ENCODE measurements at regions of chr1 and their contacts with region 1.

Region 1: GRCh38 chr1:24502709-24503058 is at the start of gene RCAN3:
- DNase-seq: peak; percentile 92
- H3K4me3 Mint-ChIP-seq: peak within 1 kb of the TSS; percentile 99
- H3K27ac Mint-ChIP-seq: peak within 1 kb of the TSS; percentile 99
- H3K4me1 Mint-ChIP-seq: peaks cover 71% of the 10 kb centered on the region
- H3K27me3 Mint-ChIP-seq: no peaks in the 10 kb centered on the region
- total RNA-seq, gene RCAN3: 59.3 to 62.6 TPM

Region 2: GRCh38 chr1:24475700-24476099 is 27.0 kb before region 1 on chr1:
- CTCF ChIA-PET with region 1: interaction called, 15 read pairs
- POLR2A ChIA-PET with region 1: interaction called, 232 read pairs
- DNase-seq: no peak
- H3K4me3 Mint-ChIP-seq: no peak overlapping the region
- H3K27ac Mint-ChIP-seq: no peak overlapping the region
- H3K4me1 Mint-ChIP-seq: peaks cover 5% of the 10 kb centered on the region
- H3K27me3 Mint-ChIP-seq: no peaks in the 10 kb centered on the region

Region 3: DNA sequence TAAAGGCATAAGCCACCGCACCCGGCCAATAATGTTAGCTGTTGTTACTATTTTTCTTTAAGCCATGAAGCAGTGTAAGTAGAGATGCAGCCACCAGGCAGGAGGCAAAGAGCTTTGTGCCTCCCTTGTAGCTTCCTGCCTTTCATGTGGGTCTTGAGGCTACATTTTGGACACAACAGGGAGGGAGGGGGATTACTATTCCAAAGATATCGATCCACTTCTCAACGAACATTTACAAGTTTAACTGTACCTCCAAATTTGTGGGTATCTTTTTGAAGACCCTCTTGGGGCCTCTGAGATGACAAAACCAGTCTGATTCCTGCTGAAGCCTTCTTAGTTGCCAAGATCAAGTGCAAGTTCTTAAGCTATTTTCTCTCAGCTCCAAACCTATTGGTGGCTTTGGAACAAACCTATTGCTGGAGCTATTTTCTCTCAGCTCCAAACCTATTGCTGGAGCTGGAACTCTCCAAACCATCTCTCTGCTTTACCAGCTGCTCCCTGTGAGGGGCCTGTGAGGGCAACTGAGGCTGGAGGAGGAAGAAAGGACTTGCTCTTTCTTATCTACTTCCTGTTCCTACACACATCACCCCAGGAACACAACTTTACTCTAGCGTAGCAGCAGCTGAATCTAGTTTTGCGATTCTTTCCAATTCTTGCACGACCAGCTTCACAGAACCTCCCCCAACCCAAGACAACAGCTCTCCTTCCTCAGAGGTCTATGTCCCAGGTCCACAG is 16.2 kb before region 1 on chr1:
- CTCF ChIA-PET with region 1: interaction called, 34 read pairs
- POLR2A ChIA-PET with region 1: interaction called, 232 read pairs
- DNase-seq: no peak
- H3K4me3 Mint-ChIP-seq: peak overlapping the region; percentile 36
- H3K27ac Mint-ChIP-seq: peak overlapping the region; percentile 82
- H3K4me1 Mint-ChIP-seq: peaks cover 59% of the 10 kb centered on the region
- H3K27me3 Mint-ChIP-seq: no peaks in the 10 kb centered on the region

Region 4: DNA sequence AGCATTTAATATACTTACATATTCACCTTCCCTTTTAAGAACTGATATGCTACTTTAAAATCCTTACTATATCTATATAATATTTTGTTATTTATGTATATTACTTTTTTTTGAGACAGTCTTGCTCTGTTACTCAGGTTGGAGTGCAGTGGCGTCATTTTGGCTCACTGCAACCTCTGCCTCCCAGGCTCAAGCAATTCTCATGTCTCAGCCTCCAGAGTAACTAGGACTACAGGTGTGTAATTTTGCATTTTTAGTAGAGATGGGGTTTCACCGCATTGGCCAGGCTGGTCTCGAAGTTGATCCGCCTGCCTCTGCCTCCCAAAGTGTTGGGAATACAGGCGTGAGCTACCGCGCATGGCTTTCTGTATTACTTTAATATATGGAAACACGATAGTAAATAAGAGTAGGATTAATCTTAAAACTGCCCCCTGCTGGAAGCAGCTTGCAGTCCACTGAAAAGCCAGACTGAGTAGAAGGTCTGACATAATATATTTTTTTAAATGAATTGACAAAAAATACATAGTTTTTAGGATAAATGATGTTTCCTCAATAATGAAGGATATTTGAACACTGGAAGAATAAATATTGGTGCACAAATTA is 24.4 kb after region 1 on chr1:
- CTCF ChIA-PET with region 1: interaction called, 43 read pairs
- POLR2A ChIA-PET with region 1: interaction called, 52 read pairs
- DNase-seq: peak; percentile 57
- H3K4me3 Mint-ChIP-seq: no peak overlapping the region
- H3K27ac Mint-ChIP-seq: peak overlapping the region; percentile 14
- H3K4me1 Mint-ChIP-seq: peaks cover 25% of the 10 kb centered on the region
- H3K27me3 Mint-ChIP-seq: no peaks in the 10 kb centered on the region

Region 5: DNA sequence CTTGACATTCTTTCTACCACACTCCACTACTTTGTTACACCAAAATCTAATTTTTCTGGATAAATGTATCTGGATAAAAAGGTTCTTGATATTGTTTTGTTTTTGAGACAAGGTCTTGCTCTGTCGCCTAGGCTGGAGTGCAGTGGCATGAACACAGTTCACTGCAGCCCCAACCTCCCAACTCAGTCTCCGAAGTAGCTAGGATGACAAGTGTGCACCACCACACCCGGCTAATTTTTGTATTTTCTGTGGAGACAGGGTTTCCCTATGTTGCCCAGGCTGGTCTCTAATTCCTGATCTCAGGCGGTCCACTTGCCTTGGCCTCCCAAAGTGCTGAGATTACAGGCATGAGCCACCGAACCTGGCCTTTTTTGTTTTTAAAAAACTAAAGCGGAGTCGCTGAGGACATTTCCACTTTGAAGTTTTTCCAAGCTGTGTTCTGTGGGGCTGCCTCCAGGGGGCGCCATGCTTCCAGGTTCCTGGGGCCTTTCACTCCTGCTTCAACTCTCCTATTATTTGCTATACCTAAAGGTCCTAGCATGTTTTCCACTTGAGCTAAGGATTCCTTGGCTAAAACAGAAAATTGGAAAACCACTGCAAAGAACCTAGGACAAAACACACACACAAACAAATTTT is 39.1 kb after region 1 on chr1:
- CTCF ChIA-PET with region 1: interaction called, 4 read pairs
- POLR2A ChIA-PET with region 1: interaction called, 100 read pairs
- DNase-seq: peak; percentile 47
- H3K4me3 Mint-ChIP-seq: no peak overlapping the region
- H3K27ac Mint-ChIP-seq: peak overlapping the region; percentile 81
- H3K4me1 Mint-ChIP-seq: peaks cover 66% of the 10 kb centered on the region
- H3K27me3 Mint-ChIP-seq: no peaks in the 10 kb centered on the region

Region 6: DNA sequence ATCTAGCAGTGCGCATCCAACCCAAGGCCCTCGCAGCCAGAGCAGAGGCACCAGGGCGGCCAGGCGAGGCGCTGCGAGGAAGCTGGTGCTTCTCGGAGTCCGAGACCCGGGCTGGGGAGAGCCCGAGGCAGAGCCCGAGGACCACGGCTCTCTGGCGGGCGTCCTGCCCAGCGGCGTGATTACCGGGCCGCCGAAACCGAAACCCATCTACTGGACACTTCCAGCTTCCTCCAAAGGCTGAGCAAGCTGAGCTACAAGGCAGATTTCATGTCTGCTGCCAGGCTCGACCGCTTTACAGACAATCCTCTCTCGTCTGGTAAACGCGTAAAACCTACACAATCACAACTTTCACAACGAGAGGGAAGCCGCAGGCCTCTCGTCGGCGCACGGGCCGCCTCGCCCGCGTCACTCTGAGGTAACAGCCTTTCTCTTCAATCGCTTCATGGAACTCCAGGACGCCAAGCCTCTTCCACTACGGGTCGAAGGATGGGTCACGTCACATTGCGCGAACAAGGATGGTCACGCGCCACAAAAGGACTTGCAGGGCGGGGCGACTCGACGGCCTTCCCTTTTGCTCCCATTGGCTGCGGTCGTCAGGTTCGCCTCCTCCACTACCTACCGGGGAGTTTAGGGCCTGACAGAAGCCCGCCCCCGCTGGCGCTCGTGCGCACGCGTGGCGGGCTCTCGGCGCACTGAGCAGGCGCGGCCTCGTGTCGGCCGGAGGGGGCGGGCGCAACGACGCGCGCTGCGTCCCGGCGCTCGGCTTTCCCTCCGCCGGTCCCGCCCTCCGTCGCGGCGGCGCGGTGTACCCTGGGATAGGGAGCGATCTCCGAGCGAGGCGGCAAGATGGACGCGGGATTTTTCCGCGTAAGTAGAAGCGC is 140.0 kb after region 1 on chr1 and contains the start of gene SRRM1:
- CTCF ChIA-PET with region 1: interaction called, 3 read pairs
- POLR2A ChIA-PET with region 1: interaction called, 21 read pairs
- DNase-seq: peak; percentile 99
- H3K4me3 Mint-ChIP-seq: peak within 1 kb of the TSS; percentile 88
- H3K27ac Mint-ChIP-seq: peak within 1 kb of the TSS; percentile 96
- H3K4me1 Mint-ChIP-seq: peaks cover 48% of the 10 kb centered on the region
- H3K27me3 Mint-ChIP-seq: peaks cover under 1% of the 10 kb centered on the region
- total RNA-seq, gene SRRM1: 172 to 183 TPM